Sigmoid colon (tissue), 7 donors: ENCODE measurements at regions of chr5 and their contacts with region 1.

Region 1: DNA sequence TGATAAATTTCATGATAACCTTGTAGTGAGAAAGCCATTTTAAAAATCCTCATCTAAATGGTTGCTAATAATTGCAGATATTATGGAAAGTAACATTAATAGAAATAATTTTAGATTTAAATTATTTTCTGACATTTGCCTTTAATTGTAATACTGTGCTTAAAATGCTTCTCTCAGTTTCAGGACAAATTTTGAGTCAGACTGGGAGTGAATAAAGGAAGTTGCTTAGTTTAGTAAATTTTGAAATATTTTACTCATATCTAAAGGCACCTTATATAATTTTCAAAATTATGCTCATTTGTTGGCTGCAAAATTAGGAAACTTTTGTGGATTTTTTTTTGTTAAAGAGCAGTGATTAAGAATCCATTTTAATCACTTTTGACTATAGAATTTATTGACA is 93.8 kb downstream of the CSNK1G3 start:
- DNase-seq: no peak
- H3K4me3 ChIP-seq: no peak overlapping the region
- H3K27ac ChIP-seq: no peak overlapping the region
- H3K4me1 ChIP-seq: no peaks in the 10 kb centered on the region
- H3K27me3 ChIP-seq: no peaks in the 10 kb centered on the region
- CTCF ChIP-seq: no peak
- EP300 ChIP-seq: no peak
- POLR2A ChIP-seq: no peak

Region 2: DNA sequence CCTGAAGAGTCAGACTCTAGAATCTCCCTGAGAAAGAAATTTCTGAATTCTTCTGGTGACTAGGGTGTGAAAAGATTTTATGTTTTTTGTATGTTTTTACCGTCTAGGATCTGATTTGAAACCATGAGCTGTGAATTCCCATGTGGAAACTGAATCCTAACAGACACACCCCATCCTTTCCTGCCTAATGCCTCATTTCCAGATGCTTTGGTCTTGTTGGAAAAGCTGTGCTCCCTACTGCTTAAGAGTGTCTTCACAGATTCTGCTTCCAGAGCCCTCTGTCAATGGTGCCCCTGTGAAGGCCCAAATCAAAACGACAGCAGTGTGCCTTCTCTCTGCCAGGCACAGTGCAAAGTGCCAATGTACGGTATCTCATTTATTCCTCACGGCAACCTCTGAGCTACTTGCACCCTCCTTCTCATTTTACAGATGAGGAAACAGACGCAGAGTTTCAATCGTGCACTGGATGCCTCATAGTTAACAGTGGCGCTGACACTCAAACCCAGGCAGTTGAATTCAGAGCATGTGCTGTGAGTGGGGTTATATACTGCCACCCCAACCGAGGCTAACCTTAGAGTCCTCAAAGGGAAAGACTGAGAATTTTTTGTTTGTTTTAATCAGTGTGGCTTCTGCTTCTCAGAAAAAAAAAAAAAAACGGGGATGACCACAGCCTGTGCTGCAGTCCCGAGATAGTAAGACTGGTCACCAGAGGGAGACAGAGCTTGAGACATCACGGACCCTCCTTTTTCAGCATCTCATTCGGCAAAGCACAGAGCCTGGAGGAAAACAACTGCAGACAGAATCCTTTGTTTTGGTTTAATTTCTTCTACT is 1105.4 kb before region 1 on chr5:
- intact Hi-C with region 1: loop called (anchors 10 kb)
- DNase-seq: peak; percentile 70
- H3K4me3 ChIP-seq: no peak overlapping the region
- H3K27ac ChIP-seq: peak overlapping the region in 3 of 4 donors; percentile 2 to 45 (median 16)
- H3K4me1 ChIP-seq: peaks cover 0 to 13% (median 4%) of the 10 kb centered on the region in 4 donors
- H3K27me3 ChIP-seq: no peaks in the 10 kb centered on the region
- CTCF ChIP-seq: peak in 1 of 4 experiments; percentile 56
- EP300 ChIP-seq: no peak
- POLR2A ChIP-seq: no peak

Region 3: GRCh38 chr5:123511648-123512605 is 93.9 kb before region 1 on chr5 and contains the start of gene CSNK1G3:
- intact Hi-C with region 1: loop called (anchors 10 kb)
- DNase-seq: peak; percentile 99
- H3K4me3 ChIP-seq: peak within 1 kb of the TSS; percentile 86 to 97 (median 92)
- H3K27ac ChIP-seq: peak within 1 kb of the TSS; percentile 90 to 96 (median 94)
- H3K4me1 ChIP-seq: peaks cover 0 to 23% (median 10%) of the 10 kb centered on the region in 4 donors
- H3K27me3 ChIP-seq: no peaks in the 10 kb centered on the region
- CTCF ChIP-seq: no peak
- EP300 ChIP-seq: no peak
- POLR2A ChIP-seq: peak; percentile 83 to 89
- total RNA-seq, gene CSNK1G3: 55.8 to 99.6 (median 77.2) TPM